ENCODE measurements at regions of chr18 and their contacts with region 1.

Region 1: GRCh38 chr18:56067214-56067894 is 479.4 kb upstream of the TCF4 start:
- DNase-seq: no peak
- ATAC-seq: no peak
- H3K4me3 ChIP-seq: no peak overlapping the region
- H3K27ac ChIP-seq: no peak overlapping the region
- H3K4me1 ChIP-seq: no peaks in the 10 kb centered on the region
- H3K27me3 ChIP-seq: no peaks in the 10 kb centered on the region
- CTCF ChIP-seq: no peak

Region 2: DNA sequence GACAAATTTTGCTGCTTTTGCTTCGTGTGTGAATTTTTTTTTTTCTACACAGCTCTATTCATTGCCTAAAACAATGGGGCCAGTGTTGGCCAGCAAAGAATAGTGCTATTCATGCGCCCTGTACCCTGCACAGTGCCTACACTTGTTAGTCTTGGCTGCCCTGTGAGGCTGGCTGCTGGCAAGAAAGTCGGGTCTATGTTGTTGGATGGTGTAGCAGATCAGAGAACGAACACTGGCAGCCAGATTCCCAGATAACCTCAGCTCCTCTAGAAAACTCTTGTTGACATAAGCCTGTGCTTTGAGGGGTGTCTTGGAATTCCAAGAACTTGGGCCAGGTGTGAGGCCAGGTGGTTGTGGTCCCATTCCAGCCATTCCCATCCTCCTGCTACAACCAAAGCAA is 23.7 kb before region 1 on chr18:
- CTCF ChIA-PET with region 1: interaction called, 16 read pairs
- POLR2A ChIA-PET with region 1: no interaction called
- in situ Hi-C with region 1: no loop called
- intact Hi-C with region 1: no loop called
- DNase-seq: no peak
- ATAC-seq: no peak
- H3K4me3 ChIP-seq: no peak overlapping the region
- H3K27ac ChIP-seq: no peak overlapping the region
- H3K4me1 ChIP-seq: no peaks in the 10 kb centered on the region
- H3K27me3 ChIP-seq: no peaks in the 10 kb centered on the region
- CTCF ChIP-seq: no peak

Region 3: GRCh38 chr18:56298935-56299334 is 231.6 kb after region 1 on chr18:
- CTCF ChIA-PET with region 1: no interaction called
- POLR2A ChIA-PET with region 1: no interaction called
- in situ Hi-C with region 1: no loop called
- intact Hi-C with region 1: no loop called
- DNase-seq: no peak
- ATAC-seq: no peak
- H3K4me3 ChIP-seq: no peak overlapping the region
- H3K27ac ChIP-seq: no peak overlapping the region
- H3K4me1 ChIP-seq: no peaks in the 10 kb centered on the region
- H3K27me3 ChIP-seq: no peaks in the 10 kb centered on the region
- CTCF ChIP-seq: no peak

Measured in Panc1 (cell line).